Left cardiac atrium (tissue), 4 donors: ENCODE measurements at regions of chr1 and their contacts with region 1.

Region 1: DNA sequence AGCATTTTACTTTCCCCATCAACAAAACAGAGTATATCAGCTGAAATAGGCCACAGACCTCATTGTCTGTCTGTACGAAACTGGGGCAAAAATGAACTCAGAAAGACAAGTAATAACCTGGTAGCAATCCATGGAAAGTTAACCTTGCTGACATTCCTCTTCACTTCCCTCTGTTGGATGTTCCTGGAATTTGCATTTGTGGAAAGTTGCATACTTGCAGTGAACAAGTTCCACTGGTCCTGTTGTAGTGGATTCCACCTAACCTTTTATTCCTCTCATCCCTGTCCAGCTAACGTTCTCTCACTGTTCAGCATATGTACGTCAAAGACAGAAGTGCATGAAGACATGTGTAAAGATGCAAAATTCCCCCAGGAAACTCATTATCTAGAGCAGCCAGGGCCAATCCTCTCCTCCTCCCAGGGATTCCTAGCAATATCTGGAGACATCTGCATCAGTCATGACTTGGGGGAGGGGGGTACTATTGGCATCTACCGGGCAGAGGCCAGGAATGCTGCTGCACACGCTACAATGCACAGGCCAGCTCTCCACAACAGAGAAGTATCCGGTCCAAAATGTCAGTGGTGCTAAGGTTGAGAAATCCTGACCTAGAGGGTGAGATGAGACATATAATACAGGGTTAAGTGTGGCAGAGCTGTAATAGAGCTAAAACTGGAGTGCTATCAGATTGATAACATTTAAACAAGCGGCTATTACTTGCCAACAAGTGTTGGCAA is 8.2 kb downstream of the LPAR3 start:
- DNase-seq: no peak
- ATAC-seq: peak; percentile 52 to 60

Region 2: DNA sequence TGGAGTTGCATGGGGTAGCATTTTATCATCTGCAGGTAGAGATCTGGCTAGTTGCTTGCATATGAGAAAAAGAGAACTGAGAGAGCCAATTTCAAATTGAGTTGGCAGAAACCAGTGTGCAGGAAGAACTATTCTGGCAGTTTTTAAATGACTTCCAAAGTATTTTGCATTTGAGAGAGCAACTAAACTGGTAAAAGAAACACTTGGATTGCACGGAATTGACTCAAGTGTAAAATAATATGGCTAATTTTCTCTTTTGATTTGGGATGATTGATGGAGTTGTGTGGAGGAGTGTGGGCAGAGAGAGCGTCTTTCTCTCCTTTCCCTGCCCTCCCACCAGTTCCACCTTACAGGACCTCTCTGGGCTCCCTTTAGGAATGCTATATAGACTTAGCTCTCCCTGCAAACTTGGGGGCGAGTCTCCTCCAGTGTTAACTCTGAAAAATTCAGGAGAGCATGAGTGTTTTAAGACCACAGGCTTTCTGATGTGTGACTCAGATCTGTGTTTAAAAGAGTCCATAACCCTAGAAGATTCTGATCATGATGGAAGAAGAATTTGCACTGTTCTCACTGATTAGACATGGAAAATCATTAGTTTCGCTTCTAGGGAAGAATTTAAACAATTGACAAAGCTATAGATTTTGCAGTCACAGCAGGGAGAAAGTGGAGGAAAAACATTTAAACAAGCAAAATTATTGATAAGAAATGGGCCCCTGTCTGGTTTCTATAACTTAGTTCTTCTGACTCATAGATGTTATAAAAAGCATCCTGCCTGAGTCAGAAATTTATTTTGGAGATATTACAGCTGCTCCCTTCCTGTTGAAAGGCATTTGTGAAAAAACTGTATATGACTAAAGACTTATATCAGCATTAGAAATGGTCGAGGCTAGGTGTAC is 285.7 kb before region 1 on chr1:
- intact Hi-C with region 1: no loop called
- DNase-seq: no peak
- ATAC-seq: peak in 1 of 2 donors; percentile 64

Region 3: GRCh38 chr1:84795966-84796600 is 88.7 kb before region 1 on chr1:
- intact Hi-C with region 1: loop called in 1 of 2 experiments (anchors 10 kb)
- DNase-seq: no peak
- ATAC-seq: peak in 1 of 2 donors; percentile 79

Region 4: GRCh38 chr1:85153149-85153891 is 268.5 kb after region 1 on chr1:
- intact Hi-C with region 1: no loop called
- DNase-seq: no peak
- ATAC-seq: no peak